ENCODE measurements at regions of chr1 and their contacts with region 1.

Region 1: DNA sequence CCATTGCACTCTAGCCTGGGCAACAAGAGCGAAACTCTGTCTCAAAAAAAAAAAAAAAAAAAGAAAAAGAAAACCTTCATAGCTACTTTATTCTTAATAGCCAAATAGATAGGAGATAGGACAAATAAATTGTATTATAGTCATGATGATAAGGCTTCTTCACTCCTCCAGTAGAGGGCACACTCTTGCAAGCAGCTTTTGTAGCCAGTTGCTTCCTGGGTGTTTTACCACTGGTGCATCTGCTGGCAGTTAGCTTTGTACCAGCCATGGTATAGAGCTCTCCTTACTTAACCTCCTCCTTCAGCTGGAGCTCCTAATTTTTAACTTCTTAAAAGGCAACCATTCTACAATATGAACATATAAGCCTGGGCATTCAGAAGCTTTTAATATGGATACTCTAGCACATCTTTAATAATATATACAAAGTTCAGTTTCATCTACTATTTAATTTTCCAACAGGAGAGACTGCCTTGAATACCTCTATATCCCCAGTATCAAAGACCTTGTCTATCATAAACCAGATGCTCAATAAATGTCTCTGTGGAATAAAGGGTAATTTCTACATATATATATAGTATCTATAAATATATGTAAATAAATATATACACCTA is 35.8 kb downstream of the EVI5 start:
- DNase-seq: peak in 1 of 2 donors; percentile 69
- ATAC-seq: peak; percentile 50 to 75 (median 62)
- H3K4me3 ChIP-seq: no peak overlapping the region
- H3K4me3 Mint-ChIP-seq: no peak overlapping the region
- H3K27ac ChIP-seq: no peak overlapping the region
- H3K27ac Mint-ChIP-seq: no peak overlapping the region
- H3K4me1 ChIP-seq: no peaks in the 10 kb centered on the region
- H3K4me1 Mint-ChIP-seq: no peaks in the 10 kb centered on the region
- H3K27me3 ChIP-seq: no peaks in the 10 kb centered on the region
- H3K27me3 Mint-ChIP-seq: peaks cover 0 to 4% of the 10 kb centered on the region in 2 donors
- CTCF ChIP-seq: peak; percentile 65

Region 2: GRCh38 chr1:92817986-92818764 is 69.0 kb after region 1 on chr1:
- intact Hi-C with region 1: loop called (anchors 1 kb)
- DNase-seq: peak in 1 of 2 donors; percentile 61
- ATAC-seq: peak; percentile 65 to 78 (median 67)
- H3K4me3 ChIP-seq: no peak overlapping the region
- H3K4me3 Mint-ChIP-seq: no peak overlapping the region
- H3K27ac ChIP-seq: no peak overlapping the region
- H3K27ac Mint-ChIP-seq: no peak overlapping the region
- H3K4me1 ChIP-seq: no peaks in the 10 kb centered on the region
- H3K4me1 Mint-ChIP-seq: no peaks in the 10 kb centered on the region
- H3K27me3 ChIP-seq: no peaks in the 10 kb centered on the region
- H3K27me3 Mint-ChIP-seq: peaks cover 14 to 28% of the 10 kb centered on the region in 2 donors
- CTCF ChIP-seq: peak; percentile 61

Measured in natural killer cell (primary cell).